Thyroid gland (tissue), 4 donors: ENCODE measurements at regions of chr12 and their contacts with region 1.

Region 1: DNA sequence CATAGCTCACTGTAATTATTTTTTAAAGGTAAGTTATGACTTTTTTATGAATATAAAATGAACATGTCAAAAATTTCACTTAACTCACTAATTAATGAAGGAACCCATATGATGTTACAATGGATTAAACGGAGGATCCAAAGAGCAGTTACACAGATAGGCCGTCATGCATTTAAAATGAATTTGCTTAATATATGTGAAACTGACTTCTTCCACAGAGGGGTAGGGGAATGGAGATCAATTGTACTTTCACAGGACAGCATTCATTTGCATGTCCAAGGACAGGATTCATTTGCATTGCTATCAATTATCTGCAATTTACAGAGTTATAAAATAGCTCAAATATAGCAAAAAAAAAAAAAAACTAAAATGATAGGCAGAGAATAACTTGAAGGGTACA is 6.6 kb upstream of the CRY1 start:
- DNase-seq: no peak
- H3K4me3 ChIP-seq: no peak overlapping the region
- H3K27ac ChIP-seq: no peak overlapping the region
- H3K4me1 ChIP-seq: peaks cover 0 to 3% of the 10 kb centered on the region in 2 donors
- H3K27me3 ChIP-seq: no peaks in the 10 kb centered on the region
- CTCF ChIP-seq: no peak
- POLR2A ChIP-seq: no peak

Region 2: DNA sequence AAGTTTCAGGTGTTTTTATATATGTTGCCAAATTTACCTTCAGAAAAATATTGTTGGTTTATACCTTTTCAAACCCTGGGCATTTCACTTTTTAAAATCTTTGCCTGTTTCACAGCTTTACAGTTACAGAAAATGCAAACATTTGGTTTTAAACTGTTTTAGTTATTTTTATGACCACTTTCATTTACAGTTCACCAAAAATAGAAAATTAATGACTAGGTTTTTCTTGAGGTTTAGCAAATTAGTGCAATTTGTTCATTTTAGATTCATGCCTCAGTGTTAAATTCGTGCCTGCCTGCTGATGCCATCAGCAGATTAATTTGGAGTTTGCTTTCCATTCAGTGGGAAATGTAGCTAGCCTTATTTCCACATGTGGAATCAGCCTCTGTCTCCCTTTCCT is 279.9 kb before region 1 on chr12:
- intact Hi-C with region 1: no loop called
- DNase-seq: no peak
- H3K4me3 ChIP-seq: no peak overlapping the region
- H3K27ac ChIP-seq: no peak overlapping the region
- H3K4me1 ChIP-seq: no peaks in the 10 kb centered on the region
- H3K27me3 ChIP-seq: no peaks in the 10 kb centered on the region
- CTCF ChIP-seq: no peak
- POLR2A ChIP-seq: no peak

Region 3: GRCh38 chr12:106955377-106956047 is 144.4 kb before region 1 on chr12 and contains the start of gene TMEM263:
- intact Hi-C with region 1: loop called (anchors 5 kb)
- DNase-seq: peak; percentile 93 to 94
- H3K4me3 ChIP-seq: peak within 1 kb of the TSS; percentile 16 to 99 (median 92)
- H3K27ac ChIP-seq: peak within 1 kb of the TSS; percentile 81 to 100 (median 97)
- H3K4me1 ChIP-seq: peaks cover 18 to 28% of the 10 kb centered on the region in 2 donors
- H3K27me3 ChIP-seq: no peaks in the 10 kb centered on the region
- CTCF ChIP-seq: peak in 1 of 6 experiments; percentile 13
- POLR2A ChIP-seq: peak; percentile 94 to 97
- total RNA-seq, gene TMEM263: 74.3 to 91.0 (median 81.9) TPM

Region 4: GRCh38 chr12:107169200-107169599 is 69.3 kb after region 1 on chr12:
- intact Hi-C with region 1: no loop called
- DNase-seq: no peak
- H3K4me3 ChIP-seq: no peak overlapping the region
- H3K27ac ChIP-seq: no peak overlapping the region
- H3K4me1 ChIP-seq: peaks cover 0 to 13% of the 10 kb centered on the region in 2 donors
- H3K27me3 ChIP-seq: no peaks in the 10 kb centered on the region
- CTCF ChIP-seq: no peak
- POLR2A ChIP-seq: no peak